Sciatic nerve (tissue), 2 donors: ENCODE measurements at regions of chr5 and their contacts with region 1.

Region 1: DNA sequence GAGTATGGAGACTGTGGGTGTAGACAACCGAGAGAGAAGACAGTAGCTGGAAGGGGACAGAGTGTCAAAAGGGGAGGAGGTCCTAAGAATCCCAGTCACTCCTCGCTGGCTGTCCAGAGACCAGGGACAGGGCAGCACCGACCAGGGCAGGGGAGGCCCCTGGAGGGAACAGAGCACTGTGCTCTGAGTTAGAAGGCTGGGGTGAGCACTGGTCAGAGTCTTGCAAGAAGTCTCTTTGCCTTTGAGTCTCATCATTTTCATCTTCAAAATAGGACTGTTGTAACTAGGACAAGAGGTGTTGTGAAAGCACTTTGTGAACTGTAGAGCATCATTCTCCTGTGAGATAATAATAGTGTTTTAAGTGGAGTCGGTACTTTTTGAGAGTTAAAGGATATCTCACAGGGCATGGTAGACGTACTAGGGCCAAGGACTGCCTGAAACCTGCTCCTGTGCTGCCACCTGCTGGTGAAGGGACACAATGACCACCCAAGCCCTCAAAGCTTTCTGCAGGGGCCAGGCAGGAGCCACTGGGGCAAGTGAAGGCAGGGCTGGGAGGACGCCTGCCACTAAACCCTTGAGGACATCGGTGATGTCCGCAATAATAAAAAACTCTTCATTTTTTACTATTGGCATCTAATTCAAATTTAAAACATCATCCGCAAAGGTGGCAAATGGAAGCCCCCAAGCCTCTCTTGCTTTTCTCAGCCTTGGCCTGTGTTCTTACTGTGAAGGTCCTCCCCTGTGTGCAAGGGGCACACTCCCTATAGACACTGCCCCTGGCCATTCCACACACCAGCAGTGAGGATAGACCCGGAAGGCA is 28.2 kb downstream of the SLC6A7 start:
- DNase-seq: peak; percentile 93
- ATAC-seq: peak; percentile 91

Region 2: GRCh38 chr5:150129813-150130492 is 88.1 kb before region 1 on chr5:
- intact Hi-C with region 1: loop called (anchors 2 kb)
- DNase-seq: peak; percentile 88
- ATAC-seq: peak; percentile 84

Region 3: GRCh38 chr5:150161242-150162141 is 56.6 kb before region 1 on chr5:
- intact Hi-C with region 1: loop called (anchors 5 kb)
- DNase-seq: peak; percentile 94
- ATAC-seq: peak; percentile 63

Region 4: DNA sequence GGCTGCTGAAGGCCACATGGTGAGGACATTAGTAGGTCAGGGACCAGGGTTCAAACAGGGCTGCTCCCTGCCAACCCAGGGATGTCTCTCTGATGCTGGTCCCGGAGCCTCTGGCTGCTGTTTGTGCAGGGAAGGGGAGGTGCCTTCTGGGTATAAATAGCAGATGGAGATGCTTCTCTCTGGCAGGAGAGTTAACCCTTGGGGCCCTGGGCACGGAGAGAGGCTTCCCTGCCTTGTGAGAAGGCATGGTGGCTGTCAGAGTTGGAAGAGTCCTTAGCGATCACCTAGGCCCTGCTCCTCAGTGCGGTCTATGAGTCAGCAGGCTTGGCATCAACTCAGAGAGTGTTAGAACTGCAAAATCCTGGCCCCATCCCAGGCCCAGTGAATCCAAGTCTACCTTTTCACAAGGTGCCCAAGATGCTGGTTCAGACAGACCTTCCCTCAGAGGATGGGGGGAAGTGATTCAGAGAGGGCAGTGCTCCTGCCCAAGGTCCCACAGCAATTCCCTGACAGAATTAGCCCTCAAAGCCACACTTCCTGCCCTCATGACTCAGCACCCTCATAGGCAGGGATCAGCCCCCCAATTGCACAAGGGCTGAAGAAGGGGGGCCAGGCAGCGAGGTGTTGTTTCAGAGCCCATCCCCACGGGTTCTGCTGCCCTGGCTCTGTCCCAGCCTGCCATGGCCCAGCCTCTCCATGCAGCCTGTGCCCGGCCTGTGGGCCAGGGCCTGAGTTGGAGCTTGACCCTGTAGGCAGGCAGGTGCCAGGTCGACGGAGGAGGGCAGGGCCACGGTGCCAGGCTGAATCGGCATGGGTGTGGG is 45.9 kb after region 1 on chr5:
- intact Hi-C with region 1: no loop called
- DNase-seq: no peak
- ATAC-seq: peak; percentile 68